Naive thymus-derived CD4-positive, alpha-beta T cell (primary cell): ENCODE measurements at regions of chr20 and their contacts with region 1.

Region 1: DNA sequence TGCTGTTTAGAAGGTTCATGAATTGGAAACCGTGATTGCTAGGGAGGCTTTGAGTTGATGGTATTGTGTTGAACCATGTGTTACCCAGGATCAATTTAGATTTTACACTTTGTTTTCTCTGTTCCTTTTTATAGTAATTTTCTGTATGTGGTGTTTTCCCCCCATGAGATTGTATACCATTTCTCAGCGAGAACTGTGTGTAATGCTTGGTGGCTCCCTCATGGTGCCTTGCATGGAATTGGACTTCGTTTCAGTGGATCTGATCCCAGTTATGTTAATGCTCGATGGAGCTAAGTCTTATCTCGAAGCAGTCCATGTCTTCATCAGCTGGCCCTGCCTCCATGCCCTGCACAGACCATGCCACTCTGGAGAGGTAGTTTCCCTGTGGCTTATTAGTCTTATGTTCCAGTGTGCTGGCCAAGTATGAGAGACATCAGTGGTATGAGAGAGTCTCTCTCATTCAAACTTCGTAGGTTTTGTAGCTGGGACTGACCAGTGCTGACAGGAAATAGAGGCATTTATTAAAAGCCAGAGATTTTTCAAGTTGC is 18.7 kb downstream of the PTPN1 start:
- DNase-seq: no peak
- ATAC-seq: no peak
- H3K4me3 ChIP-seq: no peak overlapping the region
- H3K4me3 Mint-ChIP-seq: peak overlapping the region in 8 of 10 donors; percentile 0 to 61 (median 24)
- H3K27ac ChIP-seq: no peak overlapping the region
- H3K27ac Mint-ChIP-seq: peak overlapping the region in 2 of 9 donors; percentile 53 to 68
- H3K4me1 ChIP-seq: peaks cover 29 to 37% of the 10 kb centered on the region in 2 donors
- H3K4me1 Mint-ChIP-seq: peaks cover 29 to 49% (median 36%) of the 10 kb centered on the region in 7 donors
- H3K27me3 ChIP-seq: no peaks in the 10 kb centered on the region
- H3K27me3 Mint-ChIP-seq: no peaks in the 10 kb centered on the region

Region 2: GRCh38 chr20:50335105-50335504 is 193.8 kb before region 1 on chr20:
- CTCF ChIA-PET with region 1: no interaction called
- POLR2A ChIA-PET with region 1: no interaction called
- intact Hi-C with region 1: no loop called
- DNase-seq: peak in 1 of 9 donors; percentile 14
- ATAC-seq: peak; percentile 59
- H3K4me3 ChIP-seq: no peak overlapping the region
- H3K4me3 Mint-ChIP-seq: no peak overlapping the region
- H3K27ac ChIP-seq: no peak overlapping the region
- H3K27ac Mint-ChIP-seq: no peak overlapping the region
- H3K4me1 ChIP-seq: peaks cover 13 to 16% of the 10 kb centered on the region in 2 donors
- H3K4me1 Mint-ChIP-seq: peaks cover 17 to 43% (median 21%) of the 10 kb centered on the region in 7 donors
- H3K27me3 ChIP-seq: no peaks in the 10 kb centered on the region
- H3K27me3 Mint-ChIP-seq: peaks cover 6 to 14% (median 6%) of the 10 kb centered on the region in 5 donors

Region 3: DNA sequence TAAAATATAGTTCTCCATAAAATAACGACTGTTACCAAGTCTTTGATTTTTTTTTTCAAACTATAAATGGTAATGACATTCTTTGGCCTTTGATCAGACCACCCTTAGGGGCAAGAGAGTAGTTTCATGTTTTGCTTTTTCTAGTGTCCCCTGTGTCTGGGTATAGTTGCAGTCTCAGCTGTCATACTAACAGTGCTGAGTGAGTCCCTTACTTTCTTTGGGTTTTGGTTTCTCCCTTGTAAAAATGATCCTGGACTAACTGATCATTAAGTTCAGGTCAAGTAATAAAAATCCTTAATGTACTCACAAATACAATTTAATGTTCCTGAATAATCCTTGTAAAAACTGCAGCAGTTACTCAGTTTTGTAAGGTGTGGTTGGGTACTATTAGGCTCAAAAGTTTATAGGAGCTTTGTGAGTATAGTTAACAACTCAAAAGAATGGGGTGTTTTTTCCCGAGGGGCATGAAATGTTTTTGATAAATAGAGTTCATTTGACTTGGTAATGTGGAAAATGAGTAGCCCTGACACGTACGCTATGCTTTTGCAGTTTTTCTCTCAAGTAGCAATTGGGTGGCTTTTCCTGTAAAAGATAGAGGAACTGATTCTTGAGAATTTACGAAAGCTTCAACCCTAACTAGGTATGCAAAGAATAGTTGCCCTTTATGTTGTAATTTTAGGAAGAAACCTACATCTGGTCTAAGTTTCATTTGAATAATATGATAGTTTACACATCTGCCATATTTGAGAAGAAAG is 12.5 kb before region 1 on chr20:
- CTCF ChIA-PET with region 1: interaction called, 3 read pairs
- POLR2A ChIA-PET with region 1: interaction called, 50 read pairs
- intact Hi-C with region 1: loop called in 1 of 2 experiments (anchors 2 kb)
- DNase-seq: no peak
- ATAC-seq: peak; percentile 19
- H3K4me3 ChIP-seq: peak overlapping the region; percentile 4
- H3K4me3 Mint-ChIP-seq: peak overlapping the region; percentile 8 to 99 (median 76)
- H3K27ac ChIP-seq: peak overlapping the region; percentile 62
- H3K27ac Mint-ChIP-seq: peak overlapping the region; percentile 44 to 98 (median 88)
- H3K4me1 ChIP-seq: peaks cover 77 to 85% of the 10 kb centered on the region in 2 donors
- H3K4me1 Mint-ChIP-seq: peaks cover 77 to 100% (median 99%) of the 10 kb centered on the region in 7 donors
- H3K27me3 ChIP-seq: no peaks in the 10 kb centered on the region
- H3K27me3 Mint-ChIP-seq: no peaks in the 10 kb centered on the region

Region 4: GRCh38 chr20:50540620-50541605 is 12.0 kb after region 1 on chr20:
- CTCF ChIA-PET with region 1: interaction called, 3 read pairs
- POLR2A ChIA-PET with region 1: interaction called, 5 read pairs
- intact Hi-C with region 1: loop called (anchors 2 kb)
- DNase-seq: no peak
- ATAC-seq: no peak
- H3K4me3 ChIP-seq: no peak overlapping the region
- H3K4me3 Mint-ChIP-seq: peak overlapping the region in 7 of 10 donors; percentile 6 to 59 (median 32)
- H3K27ac ChIP-seq: no peak overlapping the region
- H3K27ac Mint-ChIP-seq: peak overlapping the region in 8 of 9 donors; percentile 3 to 87 (median 54)
- H3K4me1 ChIP-seq: peaks cover 13 to 34% of the 10 kb centered on the region in 2 donors
- H3K4me1 Mint-ChIP-seq: peaks cover 60 to 93% (median 82%) of the 10 kb centered on the region in 7 donors
- H3K27me3 ChIP-seq: no peaks in the 10 kb centered on the region
- H3K27me3 Mint-ChIP-seq: no peaks in the 10 kb centered on the region